Mammary epithelial cell (primary cell): ENCODE measurements at regions of chr4 and their contacts with region 1.

Region 1: GRCh38 chr4:85106805-85107336 is 140.4 kb upstream of the WDFY3 start:
- DNase-seq: no peak
- H3K4me3 ChIP-seq: no peak overlapping the region
- H3K27ac ChIP-seq: no peak overlapping the region
- H3K4me1 ChIP-seq: peaks cover 15% of the 10 kb centered on the region
- H3K27me3 ChIP-seq: no peaks in the 10 kb centered on the region
- CTCF ChIP-seq: no peak

Region 2: GRCh38 chr4:85603437-85604336 is 496.8 kb after region 1 on chr4:
- CTCF ChIA-PET with region 1: no interaction called
- dilution Hi-C with region 1: no loop called
- in situ Hi-C with region 1: no loop called
- intact Hi-C with region 1: no loop called
- DNase-seq: no peak
- H3K4me3 ChIP-seq: no peak overlapping the region
- H3K27ac ChIP-seq: no peak overlapping the region
- H3K4me1 ChIP-seq: no peaks in the 10 kb centered on the region
- H3K27me3 ChIP-seq: no peaks in the 10 kb centered on the region
- CTCF ChIP-seq: no peak

Region 3: GRCh38 chr4:86294883-86295282 is 1188.0 kb after region 1 on chr4:
- CTCF ChIA-PET with region 1: interaction called, 14 read pairs
- dilution Hi-C with region 1: no loop called
- in situ Hi-C with region 1: no loop called
- intact Hi-C with region 1: no loop called
- DNase-seq: no peak
- H3K4me3 ChIP-seq: no peak overlapping the region
- H3K27ac ChIP-seq: no peak overlapping the region
- H3K4me1 ChIP-seq: no peaks in the 10 kb centered on the region
- H3K27me3 ChIP-seq: no peaks in the 10 kb centered on the region
- CTCF ChIP-seq: no peak

Region 4: DNA sequence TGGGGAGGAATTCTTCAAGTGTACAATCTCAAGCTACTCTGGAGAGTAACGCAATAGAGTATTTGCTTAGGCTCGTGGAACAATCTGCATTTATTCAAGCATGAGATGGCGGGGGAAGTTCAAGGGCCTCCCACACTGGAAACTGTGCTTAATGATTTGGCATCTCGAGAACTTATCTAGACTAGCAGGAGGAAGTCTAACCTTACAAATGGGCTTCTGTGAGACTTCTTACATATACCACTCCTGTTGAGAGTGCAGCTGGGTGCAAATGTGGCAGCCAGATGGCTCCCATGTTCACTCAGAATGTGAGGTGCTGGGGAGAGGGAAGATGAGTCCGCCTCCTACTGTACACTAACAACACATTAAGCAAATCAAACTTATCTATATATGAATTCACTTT is 1457.9 kb after region 1 on chr4:
- CTCF ChIA-PET with region 1: no interaction called
- dilution Hi-C with region 1: no loop called
- in situ Hi-C with region 1: no loop called
- intact Hi-C with region 1: no loop called
- DNase-seq: no peak
- H3K4me3 ChIP-seq: no peak overlapping the region
- H3K27ac ChIP-seq: no peak overlapping the region
- H3K4me1 ChIP-seq: no peaks in the 10 kb centered on the region
- H3K27me3 ChIP-seq: no peaks in the 10 kb centered on the region
- CTCF ChIP-seq: no peak